ENCODE measurements at regions of chr19 and their contacts with region 1.

Region 1: GRCh38 chr19:42244347-42245220 is 2.2 kb upstream of the GSK3A start:
- DNase-seq: peak; percentile 81
- ATAC-seq: peak; percentile 40
- H3K4me3 Mint-ChIP-seq: peak overlapping the region; percentile 99
- H3K27ac Mint-ChIP-seq: peak overlapping the region; percentile 99
- H3K4me1 Mint-ChIP-seq: peaks cover 50% of the 10 kb centered on the region
- H3K27me3 Mint-ChIP-seq: no peaks in the 10 kb centered on the region
- CTCF ChIP-seq: no peak

Region 2: DNA sequence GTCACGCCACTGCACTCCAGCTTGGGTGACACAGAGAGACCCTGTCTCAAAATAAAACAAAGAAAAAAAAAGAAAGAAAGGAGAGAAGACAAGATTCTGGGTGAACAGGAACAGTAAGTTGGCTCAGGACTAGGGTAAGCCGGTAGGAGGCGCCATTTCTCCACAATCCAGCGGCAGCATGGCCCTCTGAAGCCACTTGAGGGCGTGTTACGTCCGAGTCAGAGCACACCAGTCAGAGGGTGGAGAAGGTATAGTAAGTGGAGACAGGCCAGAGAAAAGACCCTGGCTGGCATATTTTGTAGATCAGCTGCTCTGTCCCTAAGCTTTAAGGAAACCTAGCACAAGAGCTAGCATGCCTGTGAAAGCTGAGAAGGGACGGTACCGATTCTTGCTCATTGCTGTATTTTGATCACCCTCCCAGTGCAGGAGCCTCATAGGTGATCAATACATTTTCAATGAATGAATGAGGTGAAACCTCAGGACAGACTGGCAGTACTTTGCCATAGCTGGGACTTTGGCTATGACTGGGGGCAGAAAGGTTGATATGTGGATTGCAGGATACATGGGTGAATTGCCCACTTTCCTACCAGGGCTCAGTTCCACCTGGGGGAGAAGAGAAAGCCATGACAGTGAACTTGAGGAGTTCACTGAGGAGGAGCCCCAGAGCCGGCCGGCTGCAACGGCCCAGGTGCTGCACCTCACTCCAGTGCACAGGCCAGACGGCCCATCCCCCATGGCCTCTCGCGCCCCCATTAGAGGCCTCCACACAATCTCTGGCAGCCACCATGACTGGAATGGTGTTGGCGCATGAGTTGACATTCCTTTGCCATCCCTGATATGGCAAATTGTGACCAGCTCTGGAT is 135.8 kb before region 1 on chr19:
- CTCF ChIA-PET with region 1: interaction called, 9 read pairs
- POLR2A ChIA-PET with region 1: interaction called, 10 read pairs
- intact Hi-C with region 1: loop called (anchors 1 kb)
- DNase-seq: peak; percentile 76
- ATAC-seq: peak; percentile 92
- H3K4me3 Mint-ChIP-seq: peak overlapping the region; percentile 47
- H3K27ac Mint-ChIP-seq: peak overlapping the region; percentile 81
- H3K4me1 Mint-ChIP-seq: peaks cover 69% of the 10 kb centered on the region
- H3K27me3 Mint-ChIP-seq: no peaks in the 10 kb centered on the region
- CTCF ChIP-seq: peak; percentile 99

Region 3: DNA sequence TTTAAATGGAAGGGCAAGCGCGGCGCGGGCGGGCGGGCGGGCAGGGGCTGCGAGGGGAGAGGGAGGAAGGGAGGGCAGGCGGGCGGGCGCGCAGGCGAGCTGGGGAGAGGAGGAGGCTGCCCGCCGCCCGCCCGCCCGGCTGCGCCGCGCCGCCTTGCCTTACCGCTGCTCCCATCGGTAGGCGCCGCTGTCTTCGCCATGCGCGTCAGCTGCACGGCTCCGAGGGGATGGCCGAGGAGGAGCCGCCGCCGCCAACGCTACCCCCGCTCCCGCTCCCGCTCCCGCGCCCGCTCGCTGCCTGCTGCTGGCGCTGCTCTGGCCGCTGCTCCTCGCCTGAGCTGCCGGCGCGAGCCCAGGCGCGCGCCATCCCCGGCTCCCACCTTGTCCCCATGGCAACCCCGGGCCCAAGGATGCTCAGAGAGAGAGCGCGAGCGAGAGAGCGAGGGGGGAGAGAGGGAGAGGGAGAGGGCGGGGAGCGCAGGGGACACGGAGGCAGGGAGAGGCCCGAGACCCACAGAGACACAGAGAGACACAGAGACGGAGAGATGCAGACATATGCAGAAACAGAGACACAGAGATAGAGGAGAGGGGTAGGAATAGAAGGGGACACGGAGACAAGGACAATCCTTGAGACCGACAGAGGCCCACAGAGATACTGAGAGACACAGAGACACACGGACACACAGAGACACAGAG is 67.4 kb before region 1 on chr19:
- CTCF ChIA-PET with region 1: no interaction called
- POLR2A ChIA-PET with region 1: interaction called, 5 read pairs
- intact Hi-C with region 1: loop called (anchors 2 kb)
- DNase-seq: peak; percentile 71
- ATAC-seq: peak; percentile 91
- H3K4me3 Mint-ChIP-seq: no peak overlapping the region
- H3K27ac Mint-ChIP-seq: no peak overlapping the region
- H3K4me1 Mint-ChIP-seq: peaks cover 15% of the 10 kb centered on the region
- H3K27me3 Mint-ChIP-seq: peaks cover 20% of the 10 kb centered on the region
- CTCF ChIP-seq: no peak

Region 4: GRCh38 chr19:42254989-42255765 is 10.6 kb after region 1 on chr19 and contains the start of gene ERF:
- CTCF ChIA-PET with region 1: no interaction called
- POLR2A ChIA-PET with region 1: interaction called, 19 read pairs
- intact Hi-C with region 1: loop called (anchors 1 kb)
- DNase-seq: peak; percentile 97
- ATAC-seq: peak; percentile 76
- H3K4me3 Mint-ChIP-seq: peak within 1 kb of the TSS; percentile 84
- H3K27ac Mint-ChIP-seq: peak within 1 kb of the TSS; percentile 73
- H3K4me1 Mint-ChIP-seq: peaks cover 28% of the 10 kb centered on the region
- H3K27me3 Mint-ChIP-seq: peaks cover 5% of the 10 kb centered on the region
- CTCF ChIP-seq: no peak
- total RNA-seq, gene ERF: 47.9 and 48.1 TPM in 2 replicates

Region 5: GRCh38 chr19:42295831-42296525 is 51.4 kb after region 1 on chr19:
- CTCF ChIA-PET with region 1: interaction called, 5 read pairs
- POLR2A ChIA-PET with region 1: interaction called, 4 read pairs
- intact Hi-C with region 1: loop called (anchors 1 kb)
- DNase-seq: peak; percentile 92
- ATAC-seq: peak; percentile 98
- H3K4me3 Mint-ChIP-seq: no peak overlapping the region
- H3K27ac Mint-ChIP-seq: no peak overlapping the region
- H3K4me1 Mint-ChIP-seq: peaks cover 7% of the 10 kb centered on the region
- H3K27me3 Mint-ChIP-seq: no peaks in the 10 kb centered on the region
- CTCF ChIP-seq: peak; percentile 90

Region 6: DNA sequence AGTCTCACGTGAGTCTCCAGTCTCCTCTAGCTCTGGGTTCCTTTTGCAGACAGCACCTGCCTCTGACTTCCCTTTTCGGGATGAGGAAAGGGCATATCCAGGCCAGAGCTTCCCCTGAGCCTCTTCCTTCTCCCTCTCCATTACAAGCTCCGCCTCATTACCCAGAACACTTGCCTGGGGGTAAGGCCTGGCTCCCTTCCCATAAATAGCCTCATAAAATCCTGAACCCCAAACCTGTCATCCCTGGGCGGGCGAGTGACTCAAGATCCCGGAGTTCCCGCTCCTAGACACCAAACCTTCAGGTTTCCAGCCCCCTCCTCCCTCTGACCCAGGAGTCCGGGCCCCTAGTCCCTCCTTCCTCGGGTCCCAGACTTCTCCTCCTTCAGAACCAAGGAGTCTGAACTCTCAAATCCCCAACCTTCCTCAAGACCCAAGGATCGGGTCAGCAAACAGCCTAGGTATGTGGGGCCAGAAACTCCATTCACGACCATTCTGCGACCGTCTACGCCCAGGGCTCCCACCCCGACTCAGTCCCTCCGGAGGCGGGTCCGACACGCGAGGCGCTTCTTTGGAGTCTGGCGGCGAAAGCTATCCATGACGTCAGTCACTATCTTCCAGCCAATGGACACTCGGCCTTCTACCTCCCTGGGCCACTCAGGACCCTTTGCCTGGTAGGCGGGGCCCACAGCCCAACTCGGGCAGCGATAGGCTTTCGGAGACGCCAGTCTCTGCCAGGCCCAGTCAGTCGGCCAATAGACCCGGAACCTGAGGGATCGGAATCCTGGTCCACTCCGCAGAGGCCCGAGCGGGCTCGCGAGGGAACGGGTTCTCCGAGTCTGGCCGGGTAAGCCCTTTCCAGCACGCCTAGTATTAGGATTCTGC is 152.0 kb after region 1 on chr19:
- CTCF ChIA-PET with region 1: no interaction called
- POLR2A ChIA-PET with region 1: interaction called, 3 read pairs
- intact Hi-C with region 1: loop called (anchors 1 kb)
- DNase-seq: peak; percentile 96
- ATAC-seq: peak; percentile 96
- H3K4me3 Mint-ChIP-seq: peak overlapping the region; percentile 95
- H3K27ac Mint-ChIP-seq: peak overlapping the region; percentile 89
- H3K4me1 Mint-ChIP-seq: peaks cover 45% of the 10 kb centered on the region
- H3K27me3 Mint-ChIP-seq: peaks cover 5% of the 10 kb centered on the region
- CTCF ChIP-seq: no peak